ENCODE measurements at regions of chr14 and their contacts with region 1.

Region 1: GRCh38 chr14:89720741-89721315 is 233.7 kb downstream of the EFCAB11 start:
- DNase-seq: peak; percentile 85 to 88 (median 86)
- H3K4me3 ChIP-seq: peak overlapping the region in 1 of 2 donors; percentile 39
- H3K4me3 Mint-ChIP-seq: peak overlapping the region; percentile 49 to 82 (median 77)
- H3K27ac ChIP-seq: peak overlapping the region; percentile 67
- H3K27ac Mint-ChIP-seq: peak overlapping the region; percentile 87 to 98 (median 95)
- H3K4me1 ChIP-seq: peaks cover 83% of the 10 kb centered on the region
- H3K4me1 Mint-ChIP-seq: peaks cover 68 to 87% (median 77%) of the 10 kb centered on the region in 4 donors
- H3K27me3 ChIP-seq: no peaks in the 10 kb centered on the region
- H3K27me3 Mint-ChIP-seq: no peaks in the 10 kb centered on the region

Region 2: DNA sequence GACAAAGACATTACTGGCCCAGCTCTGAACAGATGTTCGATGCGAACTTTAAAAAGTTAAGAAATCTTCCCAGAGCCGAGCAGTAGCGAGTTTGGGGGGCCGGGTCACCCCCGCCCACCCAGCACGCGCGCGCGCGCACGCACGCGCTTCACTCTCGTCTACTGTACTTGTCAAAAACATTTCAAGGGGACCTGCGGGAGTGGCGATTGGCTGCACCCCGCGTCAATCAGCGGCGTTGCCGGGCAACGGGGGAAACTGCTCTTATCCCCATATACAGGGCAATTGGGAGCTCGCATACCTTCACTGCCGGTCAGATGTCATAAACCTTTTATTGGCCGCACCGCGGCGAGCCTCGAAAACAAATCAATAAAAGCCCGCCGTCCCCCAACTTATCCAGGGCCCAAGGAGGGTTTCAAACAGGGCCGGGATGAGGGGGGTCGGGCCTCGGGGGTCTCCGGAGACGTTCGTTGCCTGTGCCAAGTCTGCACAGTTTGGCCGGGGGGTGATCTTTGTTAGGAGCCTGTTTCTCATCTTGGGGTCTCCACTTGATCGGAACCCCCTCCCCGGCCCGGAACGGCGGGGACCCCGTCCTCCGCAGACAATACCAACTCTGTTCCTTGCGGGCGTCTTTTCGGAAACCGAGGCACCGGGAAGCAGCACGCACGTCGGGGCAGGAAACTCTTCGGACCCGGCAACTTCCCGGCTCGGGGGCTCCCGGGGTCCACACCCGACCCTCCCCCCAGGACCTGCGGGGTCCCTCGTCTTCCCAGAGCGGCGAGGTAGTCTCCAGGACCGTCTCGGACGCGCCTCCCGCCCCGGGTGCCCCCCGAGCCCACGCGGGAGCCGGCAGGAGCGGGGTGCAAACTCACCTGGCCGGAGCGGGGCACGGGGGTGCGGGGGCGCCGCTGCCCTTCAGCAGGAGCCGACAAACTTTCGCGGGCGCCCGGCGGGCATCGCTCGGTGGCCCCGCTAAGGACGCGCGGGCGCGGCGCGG is 304.5 kb before region 1 on chr14:
- CTCF ChIA-PET with region 1: interaction called, 3 read pairs
- POLR2A ChIA-PET with region 1: interaction called, 4 read pairs
- intact Hi-C with region 1: loop called (anchors 2 kb)
- DNase-seq: peak; percentile 96 to 99 (median 97)
- H3K4me3 ChIP-seq: peak overlapping the region; percentile 86
- H3K4me3 Mint-ChIP-seq: peak overlapping the region; percentile 88 to 98 (median 94)
- H3K27ac ChIP-seq: peak overlapping the region; percentile 65
- H3K27ac Mint-ChIP-seq: peak overlapping the region; percentile 93 to 99 (median 95)
- H3K4me1 ChIP-seq: peaks cover 22% of the 10 kb centered on the region
- H3K4me1 Mint-ChIP-seq: peaks cover 22 to 60% (median 41%) of the 10 kb centered on the region in 4 donors
- H3K27me3 ChIP-seq: no peaks in the 10 kb centered on the region
- H3K27me3 Mint-ChIP-seq: no peaks in the 10 kb centered on the region

Region 3: GRCh38 chr14:89618811-89619551 is 101.8 kb before region 1 on chr14:
- CTCF ChIA-PET with region 1: interaction called, 16 read pairs
- POLR2A ChIA-PET with region 1: interaction called, 92 read pairs
- intact Hi-C with region 1: loop called (anchors 1 kb)
- DNase-seq: peak; percentile 75 to 84 (median 78)
- H3K4me3 ChIP-seq: peak overlapping the region; percentile 49 to 90
- H3K4me3 Mint-ChIP-seq: peak overlapping the region; percentile 94 to 99 (median 97)
- H3K27ac ChIP-seq: peak overlapping the region; percentile 80
- H3K27ac Mint-ChIP-seq: peak overlapping the region; percentile 91 to 98 (median 96)
- H3K4me1 ChIP-seq: peaks cover 60% of the 10 kb centered on the region
- H3K4me1 Mint-ChIP-seq: peaks cover 48 to 80% (median 63%) of the 10 kb centered on the region in 4 donors
- H3K27me3 ChIP-seq: no peaks in the 10 kb centered on the region
- H3K27me3 Mint-ChIP-seq: no peaks in the 10 kb centered on the region

Region 4: DNA sequence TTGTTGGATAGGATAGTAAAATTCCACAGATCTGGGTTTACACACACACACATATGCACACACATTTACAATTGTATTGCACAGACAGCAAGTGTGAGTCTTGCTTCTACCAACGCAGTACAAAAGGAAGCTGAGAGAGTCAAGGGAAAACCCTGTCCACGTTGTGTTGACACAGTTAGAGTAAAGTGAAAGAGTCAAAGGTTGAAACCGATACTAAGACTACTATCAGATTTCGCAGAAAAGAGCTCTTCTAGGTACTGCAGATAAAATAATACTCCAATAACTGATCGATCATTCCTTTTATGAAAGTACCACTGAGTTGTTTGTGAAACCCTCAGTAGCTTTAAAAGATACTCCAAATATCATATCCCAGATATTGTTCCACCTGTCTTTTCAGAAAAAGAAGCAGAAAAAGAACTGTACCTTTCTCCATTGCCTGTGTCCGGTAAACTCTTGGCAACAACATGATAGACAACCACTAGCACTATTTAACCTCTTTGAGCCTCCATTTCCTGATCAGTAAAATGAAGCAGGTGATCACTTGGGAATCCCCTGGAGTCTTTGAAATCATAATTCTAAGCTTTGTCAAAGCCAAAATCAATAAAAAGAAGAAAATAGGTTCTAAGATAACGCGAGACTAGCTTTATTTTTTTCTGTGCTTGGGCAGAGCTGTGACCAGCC is 79.2 kb before region 1 on chr14:
- CTCF ChIA-PET with region 1: interaction called, 11 read pairs
- POLR2A ChIA-PET with region 1: interaction called, 15 read pairs
- intact Hi-C with region 1: loop called (anchors 5 kb)
- DNase-seq: peak in 4 of 5 donors; percentile 17 to 46 (median 34)
- H3K4me3 ChIP-seq: peak overlapping the region in 1 of 2 donors; percentile 37
- H3K4me3 Mint-ChIP-seq: peak overlapping the region; percentile 47 to 84 (median 73)
- H3K27ac ChIP-seq: peak overlapping the region; percentile 55
- H3K27ac Mint-ChIP-seq: peak overlapping the region; percentile 89 to 93 (median 92)
- H3K4me1 ChIP-seq: peaks cover 38% of the 10 kb centered on the region
- H3K4me1 Mint-ChIP-seq: peaks cover 29 to 53% (median 38%) of the 10 kb centered on the region in 4 donors
- H3K27me3 ChIP-seq: no peaks in the 10 kb centered on the region
- H3K27me3 Mint-ChIP-seq: no peaks in the 10 kb centered on the region

Region 5: GRCh38 chr14:89701211-89702043 is 19.4 kb before region 1 on chr14:
- CTCF ChIA-PET with region 1: interaction called, 10 read pairs
- POLR2A ChIA-PET with region 1: interaction called, 37 read pairs
- intact Hi-C with region 1: loop called (anchors 1 kb)
- DNase-seq: peak; percentile 79 to 86 (median 80)
- H3K4me3 ChIP-seq: peak overlapping the region; percentile 49 to 59
- H3K4me3 Mint-ChIP-seq: peak overlapping the region; percentile 78 to 90 (median 82)
- H3K27ac ChIP-seq: peak overlapping the region; percentile 54
- H3K27ac Mint-ChIP-seq: peak overlapping the region; percentile 80 to 98 (median 93)
- H3K4me1 ChIP-seq: peaks cover 27% of the 10 kb centered on the region
- H3K4me1 Mint-ChIP-seq: peaks cover 20 to 45% (median 33%) of the 10 kb centered on the region in 4 donors
- H3K27me3 ChIP-seq: no peaks in the 10 kb centered on the region
- H3K27me3 Mint-ChIP-seq: no peaks in the 10 kb centered on the region

Region 6: DNA sequence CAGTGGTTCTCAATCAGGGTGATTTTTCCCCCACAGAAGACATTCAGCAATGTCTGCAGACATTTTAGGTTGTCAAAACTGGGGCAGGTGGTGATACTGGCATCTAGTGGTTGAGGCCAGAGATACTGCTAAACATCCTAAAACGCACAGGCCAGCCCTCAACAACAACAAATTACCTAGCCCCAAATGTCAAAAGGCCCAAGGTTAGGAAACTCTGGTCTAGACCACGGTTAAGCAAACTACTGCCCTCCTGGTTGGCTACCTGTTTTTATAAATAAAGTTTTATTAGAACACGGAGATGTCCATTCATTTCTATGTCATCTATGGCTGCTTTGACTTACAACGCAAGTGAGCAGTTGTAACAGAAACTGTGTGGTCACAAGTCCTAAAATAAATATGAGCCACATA is 47.0 kb after region 1 on chr14:
- CTCF ChIA-PET with region 1: interaction called, 32 read pairs
- POLR2A ChIA-PET with region 1: interaction called, 10 read pairs
- intact Hi-C with region 1: loop called (anchors 2 kb)
- DNase-seq: peak; percentile 64 to 69 (median 67)
- H3K4me3 ChIP-seq: no peak overlapping the region
- H3K4me3 Mint-ChIP-seq: peak overlapping the region in 4 of 8 donors; percentile 51 to 62 (median 60)
- H3K27ac ChIP-seq: no peak overlapping the region
- H3K27ac Mint-ChIP-seq: peak overlapping the region in 2 of 7 donors; percentile 2 to 56
- H3K4me1 ChIP-seq: peaks cover 9% of the 10 kb centered on the region
- H3K4me1 Mint-ChIP-seq: peaks cover 13 to 32% (median 25%) of the 10 kb centered on the region in 4 donors
- H3K27me3 ChIP-seq: no peaks in the 10 kb centered on the region
- H3K27me3 Mint-ChIP-seq: peaks cover 0 to 2% of the 10 kb centered on the region in 2 donors

Region 7: DNA sequence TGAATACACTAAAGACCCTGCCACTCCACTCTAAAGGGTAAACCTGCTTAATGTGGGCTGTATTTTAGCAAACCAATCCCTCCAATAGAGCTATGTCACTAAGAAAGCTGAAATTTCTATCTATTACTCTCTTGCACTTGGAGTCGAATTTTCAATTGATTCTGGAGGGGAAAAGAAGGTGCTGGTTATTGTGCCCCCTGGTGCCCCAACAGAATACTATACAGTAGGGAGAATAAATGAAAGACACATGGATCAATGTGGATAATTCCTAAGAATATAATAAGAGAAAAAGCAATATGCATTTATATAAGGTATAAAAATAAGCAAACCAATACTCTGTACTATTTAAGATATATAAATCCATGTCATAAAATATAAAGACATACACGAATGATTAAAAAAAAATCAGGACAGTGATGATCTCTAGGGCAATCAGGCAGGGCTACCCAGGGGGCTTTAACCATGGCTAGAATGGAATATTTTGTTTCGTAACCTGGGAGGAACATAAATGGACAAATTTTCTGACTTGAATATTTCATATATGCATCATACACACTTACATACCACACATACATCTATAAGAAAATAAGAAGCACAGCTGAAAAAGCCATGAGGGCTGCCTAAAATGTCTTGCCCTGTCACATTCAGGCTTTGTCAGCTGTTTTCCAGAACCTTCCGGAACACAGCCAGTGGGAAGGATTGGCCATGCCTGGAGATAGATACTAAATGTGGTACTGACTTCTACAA is 179.3 kb after region 1 on chr14:
- CTCF ChIA-PET with region 1: no interaction called
- POLR2A ChIA-PET with region 1: no interaction called
- intact Hi-C with region 1: loop called (anchors 5 kb)
- DNase-seq: peak in 3 of 5 donors; percentile 7 to 16 (median 15)
- H3K4me3 ChIP-seq: no peak overlapping the region
- H3K4me3 Mint-ChIP-seq: no peak overlapping the region
- H3K27ac ChIP-seq: no peak overlapping the region
- H3K27ac Mint-ChIP-seq: no peak overlapping the region
- H3K4me1 ChIP-seq: peaks cover 22% of the 10 kb centered on the region
- H3K4me1 Mint-ChIP-seq: peaks cover 15 to 31% (median 21%) of the 10 kb centered on the region in 4 donors
- H3K27me3 ChIP-seq: no peaks in the 10 kb centered on the region
- H3K27me3 Mint-ChIP-seq: no peaks in the 10 kb centered on the region

Measured in CD4-positive, alpha-beta memory T cell (primary cell).